ENCODE measurements at regions of chr1 and their contacts with region 1.

Region 1: DNA sequence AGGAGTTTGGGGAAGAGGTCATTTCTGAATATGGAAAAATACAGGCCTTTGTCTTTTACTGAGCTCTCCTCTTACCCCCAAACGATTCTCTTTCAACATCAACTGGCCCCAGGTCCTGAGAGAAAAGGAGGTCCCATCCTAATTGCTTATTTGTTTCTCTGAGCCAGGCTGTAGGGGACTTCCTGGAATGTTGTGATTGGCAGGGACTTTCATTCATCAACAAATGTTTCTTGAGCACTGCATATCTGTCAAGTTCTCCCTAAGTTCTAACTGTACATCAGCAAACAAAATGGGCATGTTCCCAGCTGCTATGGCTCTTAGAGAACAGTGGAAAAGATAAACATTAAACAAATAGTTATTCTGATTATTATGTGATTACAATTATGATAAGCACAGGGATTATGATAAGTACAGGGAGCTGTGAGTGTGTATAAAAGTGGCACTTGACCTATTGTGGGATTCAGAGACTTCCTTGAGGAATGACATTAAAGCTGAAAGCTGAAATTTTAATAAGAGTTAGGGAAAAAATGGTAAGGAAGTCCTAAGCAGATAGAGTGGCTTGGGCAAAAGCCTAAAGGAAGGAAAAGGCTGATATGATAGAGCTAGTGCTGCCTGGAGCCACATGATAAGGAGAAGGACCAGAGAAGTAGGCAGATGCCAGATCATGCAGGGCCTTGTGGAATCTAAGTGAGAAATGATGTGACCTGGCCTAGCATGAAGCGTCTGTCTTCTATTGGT is 11.6 kb downstream of the GPX7 start:
- DNase-seq: no peak
- H3K4me3 Mint-ChIP-seq: no peak overlapping the region
- H3K27ac Mint-ChIP-seq: no peak overlapping the region
- H3K4me1 Mint-ChIP-seq: peaks cover 14% of the 10 kb centered on the region
- H3K27me3 Mint-ChIP-seq: no peaks in the 10 kb centered on the region

Region 2: DNA sequence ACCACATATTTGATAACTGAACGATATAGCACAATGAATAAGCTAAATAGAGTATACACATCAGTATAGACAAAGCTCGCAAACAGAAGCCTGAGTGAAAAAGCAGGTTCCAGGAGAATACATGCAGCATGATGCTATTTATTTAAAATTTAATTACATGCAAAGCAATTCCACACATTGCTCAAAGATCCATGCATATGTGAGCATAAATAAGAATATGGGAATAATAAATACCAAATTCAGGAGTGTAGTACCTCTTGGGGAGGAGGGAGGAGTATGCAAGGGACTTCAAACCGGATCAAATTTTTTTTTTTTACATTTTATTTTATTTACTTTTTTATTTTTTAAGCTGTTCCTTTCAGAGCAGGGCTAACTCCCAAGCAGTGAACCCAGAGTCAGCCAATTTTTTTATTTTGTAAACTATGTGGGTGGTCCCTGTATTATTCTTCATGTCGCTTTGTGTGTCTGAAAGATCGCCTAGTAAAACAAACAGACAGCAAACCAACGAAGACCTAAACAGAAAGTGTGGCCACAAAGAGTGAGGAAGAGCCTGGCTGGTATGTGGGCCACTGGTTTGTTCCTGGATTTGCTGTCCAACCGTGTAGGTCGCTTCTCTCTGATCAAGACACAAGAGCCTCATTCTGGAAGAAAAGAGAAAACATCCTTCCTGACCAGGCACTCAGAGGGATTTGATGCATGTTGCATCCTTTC is 15.0 kb after region 1 on chr1:
- CTCF ChIA-PET with region 1: interaction called, 15 read pairs
- POLR2A ChIA-PET with region 1: no interaction called
- DNase-seq: no peak
- H3K4me3 Mint-ChIP-seq: no peak overlapping the region
- H3K27ac Mint-ChIP-seq: no peak overlapping the region
- H3K4me1 Mint-ChIP-seq: peaks cover 19% of the 10 kb centered on the region
- H3K27me3 Mint-ChIP-seq: peaks cover 2% of the 10 kb centered on the region

Region 3: GRCh38 chr1:52920791-52921291 is 307.0 kb after region 1 on chr1:
- CTCF ChIA-PET with region 1: no interaction called
- POLR2A ChIA-PET with region 1: no interaction called
- DNase-seq: no peak
- H3K4me3 Mint-ChIP-seq: peak overlapping the region; percentile 81
- H3K27ac Mint-ChIP-seq: peak overlapping the region; percentile 71
- H3K4me1 Mint-ChIP-seq: peaks cover 30% of the 10 kb centered on the region
- H3K27me3 Mint-ChIP-seq: peaks cover 8% of the 10 kb centered on the region